Ovary (tissue), 10 donors: ENCODE measurements at regions of chr11 and their contacts with region 1.

Region 1: DNA sequence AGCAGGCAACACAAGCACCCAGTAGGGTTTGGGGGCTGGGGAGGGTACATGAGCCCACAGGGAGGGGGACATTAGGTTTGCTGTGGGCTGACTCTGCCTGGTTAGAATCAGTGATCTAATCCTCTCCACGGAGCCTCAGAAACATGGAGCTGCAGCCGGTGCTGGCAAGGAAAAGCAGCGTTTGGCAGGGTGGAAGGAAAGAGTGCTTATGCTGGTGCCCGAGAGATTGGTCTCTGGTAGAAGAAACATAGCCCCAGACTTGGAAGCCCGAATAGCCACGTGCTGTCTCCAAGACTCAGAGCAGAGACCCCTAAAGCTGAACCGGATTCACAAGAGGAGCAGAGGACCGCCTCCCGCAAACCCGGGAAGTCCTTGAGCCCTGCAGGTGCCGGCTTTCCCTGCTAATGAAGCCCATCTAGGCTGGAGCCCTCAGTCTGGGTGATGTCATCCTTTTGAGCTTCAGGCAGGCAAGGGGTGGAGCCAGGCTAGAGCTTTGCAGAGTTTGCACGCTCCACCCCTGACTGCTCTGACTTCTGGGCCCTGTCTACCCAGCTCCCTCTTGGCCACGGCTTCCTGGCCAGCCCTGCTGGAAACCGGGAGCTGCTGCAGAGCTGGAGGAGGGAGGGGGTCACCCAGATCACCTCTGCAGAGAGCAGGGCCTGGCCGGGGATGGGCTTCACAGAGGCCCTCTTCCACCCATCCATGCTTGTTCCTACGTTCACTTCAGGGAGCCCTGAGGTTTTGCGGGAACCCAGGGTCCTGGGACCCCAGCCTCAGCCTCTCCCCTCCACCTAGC is 35.0 kb upstream of the JAM3 start:
- DNase-seq: peak; percentile 81 to 86 (median 84)
- H3K4me3 ChIP-seq: no peak overlapping the region
- H3K27ac ChIP-seq: peak overlapping the region; percentile 54 to 85
- H3K4me1 ChIP-seq: peaks cover 9% of the 10 kb centered on the region
- H3K27me3 ChIP-seq: no peaks in the 10 kb centered on the region
- CTCF ChIP-seq: no peak
- EP300 ChIP-seq: no peak
- POLR2A ChIP-seq: no peak

Region 2: GRCh38 chr11:133956650-133957633 is 77.0 kb before region 1 on chr11 and contains the start of gene IGSF9B:
- intact Hi-C with region 1: loop called in 1 of 4 experiments (anchors 10 kb)
- DNase-seq: peak; percentile 80 to 92 (median 83)
- H3K4me3 ChIP-seq: peak within 1 kb of the TSS; percentile 63
- H3K27ac ChIP-seq: peak within 1 kb of the TSS in 1 of 2 donors; percentile 54
- H3K4me1 ChIP-seq: no peaks in the 10 kb centered on the region
- H3K27me3 ChIP-seq: no peaks in the 10 kb centered on the region
- CTCF ChIP-seq: peak in 1 of 3 donors; percentile 12
- EP300 ChIP-seq: no peak
- POLR2A ChIP-seq: no peak
- total RNA-seq, gene IGSF9B: 0.48 to 15.4 (median 8.8) TPM

Region 3: DNA sequence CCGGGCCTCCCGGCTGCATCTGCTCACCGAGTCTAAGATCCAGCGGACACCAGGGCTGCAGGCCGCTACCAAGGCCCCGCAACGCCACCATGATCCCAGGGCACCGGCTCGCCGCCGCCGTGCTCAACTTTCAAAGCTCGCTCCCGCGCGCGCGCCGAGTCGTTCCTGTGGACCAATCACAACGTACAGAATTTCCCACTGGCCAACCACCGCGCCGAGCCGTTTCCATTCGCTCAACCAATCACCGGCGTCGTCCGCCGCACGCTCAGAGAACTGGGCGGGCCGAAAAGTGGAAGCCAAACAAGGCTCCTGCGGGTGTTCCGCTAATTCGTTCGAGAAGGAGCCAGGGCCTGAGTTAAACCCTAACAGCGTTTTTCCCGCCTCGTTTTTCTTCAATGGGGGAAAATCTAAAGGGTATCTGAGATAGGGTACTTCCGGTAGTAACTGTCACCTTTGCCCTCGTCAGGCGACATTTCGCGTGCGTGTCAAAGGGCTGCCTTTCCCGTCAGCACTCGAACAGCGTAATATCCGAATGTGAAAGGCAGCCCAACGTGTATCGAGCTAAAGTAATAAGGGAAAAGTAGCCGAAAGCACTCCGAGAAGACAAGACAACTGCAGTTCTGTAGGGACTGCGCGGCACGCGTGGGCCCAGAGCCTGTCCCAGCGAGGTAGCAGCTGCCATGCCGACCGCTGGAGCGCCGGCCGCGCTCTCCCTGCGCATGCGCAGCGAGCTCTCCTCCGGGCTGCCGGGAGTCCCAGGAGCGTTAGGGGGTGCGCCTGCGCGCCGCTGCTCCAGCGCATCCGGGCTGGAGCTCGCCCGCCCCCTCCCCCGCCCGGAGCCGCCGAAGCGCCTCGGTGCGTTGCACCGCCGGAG is 190.2 kb after region 1 on chr11 and contains the starts of genes NCAPD3 and VPS26B:
- intact Hi-C with region 1: loop called in 1 of 4 experiments (anchors 10 kb)
- DNase-seq: peak; percentile 93 to 97 (median 94)
- H3K4me3 ChIP-seq: peak within 1 kb of the TSS; percentile 60
- H3K27ac ChIP-seq: peak within 1 kb of the TSS; percentile 59 to 88
- H3K4me1 ChIP-seq: peaks cover 9% of the 10 kb centered on the region
- H3K27me3 ChIP-seq: no peaks in the 10 kb centered on the region
- CTCF ChIP-seq: peak in 2 of 3 donors; percentile 30 to 47
- EP300 ChIP-seq: peak; percentile 87
- POLR2A ChIP-seq: peak; percentile 98
- total RNA-seq, gene NCAPD3: 6.2 to 12.1 (median 9.9) TPM
- total RNA-seq, gene VPS26B: 19.4 to 46.5 (median 36.3) TPM

Region 4: DNA sequence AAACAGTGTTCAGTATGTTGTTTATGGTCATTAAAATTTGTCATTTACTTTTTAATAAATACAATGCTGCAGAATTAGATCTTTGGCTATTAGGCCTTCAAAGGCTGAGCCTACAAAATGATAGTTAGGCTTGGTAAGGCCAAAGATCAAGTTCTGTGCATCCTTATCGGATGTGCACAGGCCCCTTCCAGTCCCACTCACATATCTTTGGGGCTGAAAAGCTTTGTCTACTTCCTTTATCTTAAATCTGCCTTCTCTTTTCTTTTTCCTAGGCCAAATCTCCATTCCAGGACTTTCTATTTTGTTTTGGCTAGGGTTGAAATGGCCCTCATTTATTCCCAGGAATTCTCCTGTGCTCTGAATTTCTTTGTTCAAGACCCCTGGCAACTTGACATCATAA is 294.5 kb after region 1 on chr11:
- intact Hi-C with region 1: no loop called
- DNase-seq: no peak
- H3K4me3 ChIP-seq: no peak overlapping the region
- H3K27ac ChIP-seq: no peak overlapping the region
- H3K4me1 ChIP-seq: peaks cover 8% of the 10 kb centered on the region
- H3K27me3 ChIP-seq: no peaks in the 10 kb centered on the region
- CTCF ChIP-seq: no peak
- EP300 ChIP-seq: no peak
- POLR2A ChIP-seq: no peak